Posterior vena cava (tissue), 2 donors: ENCODE measurements at regions of chr1 and their contacts with region 1.

Region 1: GRCh38 chr1:165173409-165173808 is 183.1 kb downstream of the LMX1A start:
- DNase-seq: no peak

Region 2: DNA sequence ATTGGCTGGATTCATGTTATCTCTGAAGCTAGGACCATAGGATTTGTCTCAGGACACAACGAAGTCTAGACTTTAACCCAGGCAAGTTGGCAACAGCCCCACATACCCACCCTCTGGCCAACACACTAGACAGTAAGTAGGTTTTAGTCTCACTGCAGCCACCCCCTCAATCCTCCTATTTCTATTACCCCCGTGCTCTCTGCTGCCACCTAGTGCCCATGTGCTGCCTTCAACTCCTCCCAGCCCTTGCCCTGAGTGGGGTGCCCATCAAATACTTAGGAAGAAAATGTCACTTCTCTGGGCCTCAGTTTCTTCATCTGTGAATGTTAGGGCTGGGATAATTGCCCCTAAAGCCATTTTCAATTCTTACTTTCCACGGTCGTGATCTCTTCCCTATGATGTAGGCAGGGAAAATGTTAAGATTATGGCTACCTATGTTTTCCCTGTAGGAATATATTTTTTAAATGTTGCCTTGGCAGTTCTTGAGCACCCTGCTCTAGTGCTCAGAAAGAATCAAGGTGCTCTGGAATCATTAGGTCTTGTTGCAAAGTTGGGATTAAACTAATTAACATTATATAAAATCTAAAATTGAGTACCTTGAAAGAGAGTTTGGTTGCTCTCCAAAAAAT is 29.9 kb before region 1 on chr1:
- intact Hi-C with region 1: no loop called
- DNase-seq: no peak

Region 3: GRCh38 chr1:166418344-166418933 is 1245.0 kb after region 1 on chr1:
- intact Hi-C with region 1: loop called in 1 of 2 experiments (anchors 5 kb)
- DNase-seq: no peak